Heart left ventricle (tissue), 16 donors: ENCODE measurements at regions of chr14 and their contacts with region 1.

Region 1: GRCh38 chr14:100662879-100663760 is 63.6 kb upstream of the DLK1 start:
- DNase-seq: peak; percentile 53 to 81 (median 65)
- ATAC-seq: peak in 2 of 4 donors; percentile 59 to 62
- H3K4me3 ChIP-seq: no peak overlapping the region
- H3K27ac ChIP-seq: peak overlapping the region in 1 of 12 donors; percentile 23
- H3K4me1 ChIP-seq: peaks cover 0 to 16% (median 0%) of the 10 kb centered on the region in 12 donors
- H3K27me3 ChIP-seq: peaks cover 0 to 41% (median 4%) of the 10 kb centered on the region in 9 donors
- CTCF ChIP-seq: peak; percentile 77 to 99 (median 92)
- POLR2A ChIP-seq: no peak

Region 2: GRCh38 chr14:100726550-100727085 is 63.5 kb after region 1 on chr14 and contains the start of gene DLK1:
- intact Hi-C with region 1: loop called in 1 of 10 experiments (anchors 10 kb)
- DNase-seq: peak in 1 of 5 donors; percentile 49
- ATAC-seq: no peak
- H3K4me3 ChIP-seq: peak within 1 kb of the TSS in 5 of 12 donors; percentile 10 to 27 (median 21)
- H3K27ac ChIP-seq: no peak within 1 kb of the TSS
- H3K4me1 ChIP-seq: peaks cover 0 to 9% (median 0%) of the 10 kb centered on the region in 12 donors
- H3K27me3 ChIP-seq: peaks cover 26 to 97% (median 54%) of the 10 kb centered on the region in 9 donors
- CTCF ChIP-seq: no peak
- POLR2A ChIP-seq: no peak
- total RNA-seq, gene DLK1: 1.4 to 52.4 (median 10.2) TPM

Region 3: DNA sequence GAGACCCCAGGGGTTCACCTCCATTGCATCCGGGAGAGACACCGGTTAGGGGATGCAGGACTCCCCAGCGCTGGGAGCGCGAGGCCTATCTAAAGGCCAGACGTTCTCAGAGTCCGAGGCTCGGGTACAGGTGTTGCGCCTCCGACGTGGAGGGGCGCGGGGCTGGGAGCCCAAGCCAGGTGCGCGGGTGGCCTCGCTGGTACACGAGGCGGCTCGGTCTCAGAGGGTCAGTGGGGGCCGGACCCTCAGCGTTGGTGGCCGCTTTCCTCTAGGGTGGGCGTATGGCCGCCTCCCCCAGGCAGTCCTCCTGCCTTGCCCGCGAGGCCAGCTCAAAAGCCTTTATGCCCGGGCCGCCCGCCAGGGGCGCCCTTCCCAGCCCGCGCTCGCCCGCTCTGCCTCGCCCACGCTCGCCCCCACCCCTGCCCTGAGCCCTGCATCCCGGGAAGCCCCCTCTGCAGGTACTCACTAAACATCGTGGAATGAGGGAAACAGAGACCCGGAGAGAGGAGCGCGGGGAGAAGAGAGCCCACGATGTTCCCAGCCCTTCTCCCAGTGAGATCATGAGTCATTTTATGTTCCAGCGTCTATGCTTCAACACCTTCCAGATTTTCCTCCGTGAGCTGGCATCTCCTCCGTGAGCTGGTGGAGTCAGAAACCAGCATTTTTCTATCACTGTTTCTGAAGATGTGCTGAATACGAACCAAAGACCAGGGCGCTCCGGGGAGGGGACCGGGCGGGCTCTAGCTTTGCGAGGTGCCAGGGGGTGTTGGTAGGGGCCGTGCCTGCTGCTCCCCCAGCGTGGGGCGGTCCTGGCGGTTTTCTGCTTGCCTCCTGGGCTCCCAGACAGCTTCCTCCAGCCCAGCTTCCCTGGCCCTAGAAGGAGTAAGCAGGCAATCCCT is 972.0 kb after region 1 on chr14:
- intact Hi-C with region 1: loop called in 1 of 10 experiments (anchors 5 kb)
- DNase-seq: no peak
- ATAC-seq: peak in 1 of 4 donors; percentile 35
- H3K4me3 ChIP-seq: no peak overlapping the region
- H3K27ac ChIP-seq: no peak overlapping the region
- H3K4me1 ChIP-seq: no peaks in the 10 kb centered on the region
- H3K27me3 ChIP-seq: peaks cover 0 to 27% (median under 1%) of the 10 kb centered on the region in 9 donors
- CTCF ChIP-seq: no peak
- POLR2A ChIP-seq: no peak